Heart left ventricle (tissue), 16 donors: ENCODE measurements at regions of chr7 and their contacts with region 1.

Region 1: DNA sequence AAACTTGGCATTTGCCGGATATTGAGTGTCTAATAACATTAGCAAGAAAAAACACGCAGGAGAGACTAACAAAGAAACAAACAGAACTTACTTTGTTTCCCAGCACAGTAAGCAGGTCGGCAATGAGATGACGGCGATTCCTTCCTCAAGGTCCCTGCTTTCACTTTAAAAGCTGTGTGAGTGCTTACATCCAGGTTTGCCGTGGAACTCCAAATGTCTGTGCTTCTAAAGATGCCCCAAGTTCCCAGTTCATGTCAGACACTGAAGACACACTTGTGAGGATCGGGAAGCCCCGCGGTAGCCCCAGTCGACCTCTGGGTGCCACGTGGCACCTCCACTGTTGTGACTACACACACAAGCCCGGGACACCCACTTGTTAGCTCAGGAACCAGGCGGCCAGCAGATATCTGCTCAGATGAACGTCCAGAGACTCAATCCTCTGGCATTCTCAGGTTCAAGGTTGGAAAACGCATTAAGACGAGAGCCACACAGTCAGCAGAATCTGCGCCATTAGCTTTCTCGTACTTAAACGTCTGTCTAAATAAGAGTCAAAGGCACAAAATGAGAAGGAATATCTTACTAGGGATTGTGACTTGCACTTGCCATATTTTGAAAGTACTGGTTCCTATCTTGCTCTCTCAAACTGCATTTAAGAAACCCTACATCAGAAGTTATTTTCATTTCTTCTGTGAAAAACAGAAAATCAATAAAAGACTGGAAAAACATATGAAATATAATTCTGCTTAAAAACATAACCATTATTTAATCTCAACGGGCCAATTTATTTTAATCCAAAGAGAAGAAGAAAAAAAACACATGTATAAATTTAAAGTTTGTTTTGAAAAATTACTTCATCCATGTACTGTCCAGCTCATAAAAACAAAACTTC is 207.6 kb upstream of the KLF14 start:
- DNase-seq: peak in 3 of 5 donors; percentile 46 to 67 (median 53)
- ATAC-seq: peak; percentile 28 to 75 (median 70)
- H3K4me3 ChIP-seq: peak overlapping the region in 11 of 12 donors; percentile 9 to 57 (median 45)
- H3K27ac ChIP-seq: peak overlapping the region; percentile 14 to 87 (median 66)
- H3K4me1 ChIP-seq: peaks cover 7 to 93% (median 49%) of the 10 kb centered on the region in 12 donors
- H3K27me3 ChIP-seq: no peaks in the 10 kb centered on the region
- CTCF ChIP-seq: no peak
- POLR2A ChIP-seq: no peak

Region 2: GRCh38 chr7:130254555-130254954 is 687.0 kb before region 1 on chr7:
- intact Hi-C with region 1: no loop called
- DNase-seq: no peak
- ATAC-seq: no peak
- H3K4me3 ChIP-seq: no peak overlapping the region
- H3K27ac ChIP-seq: no peak overlapping the region
- H3K4me1 ChIP-seq: no peaks in the 10 kb centered on the region
- H3K27me3 ChIP-seq: no peaks in the 10 kb centered on the region
- CTCF ChIP-seq: no peak
- POLR2A ChIP-seq: no peak

Region 3: GRCh38 chr7:130926001-130926691 is 15.4 kb before region 1 on chr7:
- intact Hi-C with region 1: loop called in 1 of 10 experiments (anchors 2 kb)
- DNase-seq: no peak
- ATAC-seq: no peak
- H3K4me3 ChIP-seq: no peak overlapping the region
- H3K27ac ChIP-seq: peak overlapping the region in 2 of 12 donors; percentile 12 to 71
- H3K4me1 ChIP-seq: peaks cover 2 to 99% (median 41%) of the 10 kb centered on the region in 12 donors
- H3K27me3 ChIP-seq: no peaks in the 10 kb centered on the region
- CTCF ChIP-seq: no peak
- POLR2A ChIP-seq: no peak

Region 4: GRCh38 chr7:131052285-131052904 is 110.8 kb after region 1 on chr7:
- intact Hi-C with region 1: no loop called
- DNase-seq: no peak
- ATAC-seq: no peak
- H3K4me3 ChIP-seq: no peak overlapping the region
- H3K27ac ChIP-seq: peak overlapping the region in 1 of 12 donors; percentile 28
- H3K4me1 ChIP-seq: peaks cover 0 to 90% (median 72%) of the 10 kb centered on the region in 12 donors
- H3K27me3 ChIP-seq: no peaks in the 10 kb centered on the region
- CTCF ChIP-seq: no peak
- POLR2A ChIP-seq: no peak